ENCODE measurements at regions of chr13 and their contacts with region 1.

Region 1: DNA sequence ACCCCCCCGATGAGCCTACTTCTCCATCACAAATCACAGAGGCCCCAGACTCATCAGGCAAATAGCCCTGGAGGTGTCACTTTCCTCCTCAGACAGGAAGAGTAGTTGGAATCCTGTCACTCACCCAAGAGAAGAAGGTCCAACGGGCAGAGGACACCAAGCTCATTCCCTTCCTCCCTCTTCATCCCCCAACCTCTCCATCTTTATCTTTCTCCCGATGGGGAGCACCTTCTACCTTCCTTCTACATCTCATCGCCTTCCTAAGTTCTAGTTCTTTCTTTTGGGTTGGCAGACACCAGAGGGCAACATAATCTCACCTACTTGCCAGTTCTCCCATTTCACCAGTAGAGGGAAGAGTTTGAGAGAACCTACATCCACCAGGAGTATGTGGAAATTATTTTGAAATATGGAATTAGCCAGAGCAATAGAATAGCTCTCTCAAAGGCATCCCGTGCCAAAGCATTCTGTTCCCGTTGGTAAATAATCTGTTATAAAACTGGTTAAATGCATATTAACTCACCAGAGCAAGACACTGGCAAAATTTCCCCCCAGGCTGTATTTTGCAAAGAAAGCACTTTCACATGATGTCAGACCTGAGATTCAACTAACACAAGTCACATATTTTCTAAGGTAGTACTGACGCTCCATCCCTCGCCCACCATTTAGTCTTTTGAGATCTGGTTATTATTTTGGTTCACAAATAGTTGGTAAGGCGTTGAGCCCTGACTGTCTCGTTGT is 55.0 kb downstream of the ZIC5 start:
- DNase-seq: peak in 3 of 14 experiments; percentile 64 to 74 (median 73)
- ATAC-seq: peak; percentile 83
- H3K4me3 ChIP-seq: no peak overlapping the region
- H3K4me3 Mint-ChIP-seq: no peak overlapping the region
- H3K27ac ChIP-seq: no peak overlapping the region
- H3K27ac Mint-ChIP-seq: no peak overlapping the region
- H3K4me1 ChIP-seq: peaks cover 21% of the 10 kb centered on the region
- H3K4me1 Mint-ChIP-seq: peaks cover 8% of the 10 kb centered on the region
- H3K27me3 ChIP-seq: no peaks in the 10 kb centered on the region
- H3K27me3 Mint-ChIP-seq: peaks cover 16% of the 10 kb centered on the region
- CTCF ChIP-seq: peak; percentile 95

Region 2: GRCh38 chr13:99834246-99834645 is 82.3 kb before region 1 on chr13:
- CTCF ChIA-PET with region 1: no interaction called
- POLR2A ChIA-PET with region 1: no interaction called
- intact Hi-C with region 1: no loop called
- DNase-seq: no peak
- ATAC-seq: no peak
- H3K4me3 ChIP-seq: no peak overlapping the region
- H3K4me3 Mint-ChIP-seq: no peak overlapping the region
- H3K27ac ChIP-seq: no peak overlapping the region
- H3K27ac Mint-ChIP-seq: no peak overlapping the region
- H3K4me1 ChIP-seq: no peaks in the 10 kb centered on the region
- H3K4me1 Mint-ChIP-seq: no peaks in the 10 kb centered on the region
- H3K27me3 ChIP-seq: no peaks in the 10 kb centered on the region
- H3K27me3 Mint-ChIP-seq: no peaks in the 10 kb centered on the region
- CTCF ChIP-seq: no peak

Region 3: DNA sequence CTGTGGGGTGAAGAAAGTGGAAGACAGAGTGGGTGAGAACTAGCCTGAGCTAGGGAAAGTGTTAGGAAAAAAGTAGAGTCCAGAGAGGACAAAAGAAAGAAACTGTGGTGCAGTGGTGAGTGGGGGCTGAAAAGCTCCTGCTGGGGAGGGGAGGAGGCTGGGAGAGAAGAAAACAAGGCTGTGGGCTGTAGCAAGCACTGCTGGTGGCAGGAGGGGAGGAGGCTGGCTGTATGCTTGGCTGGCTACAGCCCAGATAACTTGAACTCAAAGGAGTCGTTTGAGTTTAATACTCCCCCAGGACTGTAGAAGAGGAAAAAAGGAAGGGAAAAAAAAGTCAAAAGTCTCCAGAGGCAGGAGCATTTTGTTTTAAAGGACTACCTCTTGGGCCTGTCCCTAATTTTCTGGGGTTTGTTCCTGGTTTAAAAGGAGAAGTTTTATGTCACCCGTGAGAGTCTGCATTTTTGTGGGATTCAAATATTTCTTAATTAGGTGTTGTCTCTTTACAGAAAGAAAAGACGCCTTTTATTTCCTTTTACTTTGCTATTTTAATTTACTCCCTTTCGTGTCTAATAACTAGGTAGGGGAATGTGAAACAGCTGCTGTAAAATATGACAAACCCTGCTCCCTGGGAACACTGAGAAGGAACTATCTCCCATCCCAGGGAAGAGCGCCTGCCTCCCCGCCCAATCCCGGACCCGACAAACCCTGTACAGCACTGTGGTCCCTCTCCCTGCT is 33.3 kb after region 1 on chr13:
- CTCF ChIA-PET with region 1: no interaction called
- POLR2A ChIA-PET with region 1: no interaction called
- intact Hi-C with region 1: no loop called
- DNase-seq: no peak
- ATAC-seq: no peak
- H3K4me3 ChIP-seq: no peak overlapping the region
- H3K4me3 Mint-ChIP-seq: no peak overlapping the region
- H3K27ac ChIP-seq: no peak overlapping the region
- H3K27ac Mint-ChIP-seq: no peak overlapping the region
- H3K4me1 ChIP-seq: no peaks in the 10 kb centered on the region
- H3K4me1 Mint-ChIP-seq: peaks cover under 1% of the 10 kb centered on the region
- H3K27me3 ChIP-seq: peaks cover 30 to 40% of the 10 kb centered on the region in 2 experiments
- H3K27me3 Mint-ChIP-seq: peaks cover 82% of the 10 kb centered on the region
- CTCF ChIP-seq: no peak

Region 4: DNA sequence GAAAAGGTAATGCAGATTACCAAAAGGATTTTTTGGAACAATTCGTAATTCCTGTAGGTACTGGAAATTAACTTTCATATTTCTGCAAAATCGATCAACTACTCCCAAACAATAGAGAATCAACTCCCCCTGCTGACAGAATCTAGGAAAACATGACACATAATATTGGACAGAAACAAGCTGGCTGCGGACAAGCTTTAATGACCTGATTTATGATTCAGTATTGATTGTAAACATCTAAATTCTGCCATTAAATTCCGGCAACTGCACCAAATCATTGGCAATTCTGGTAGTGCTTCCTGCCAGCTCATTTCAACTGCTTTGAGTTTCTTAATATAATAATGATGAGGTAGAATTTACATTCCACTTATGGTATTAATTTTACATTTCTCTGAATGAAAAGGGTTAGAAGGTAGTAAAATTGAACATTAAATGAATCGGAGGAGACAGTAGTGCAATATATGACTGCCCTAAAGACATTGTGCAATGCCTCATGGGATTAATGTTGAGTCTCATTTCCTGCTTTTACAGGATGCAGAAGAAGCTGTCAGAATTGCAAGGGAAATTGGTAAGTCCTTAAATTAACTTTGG is 318.9 kb after region 1 on chr13:
- CTCF ChIA-PET with region 1: no interaction called
- POLR2A ChIA-PET with region 1: no interaction called
- intact Hi-C with region 1: loop called in 1 of 2 experiments (anchors 2 kb)
- DNase-seq: peak in 4 of 14 experiments; percentile 27 to 67 (median 65)
- ATAC-seq: no peak
- H3K4me3 ChIP-seq: no peak overlapping the region
- H3K4me3 Mint-ChIP-seq: no peak overlapping the region
- H3K27ac ChIP-seq: no peak overlapping the region
- H3K27ac Mint-ChIP-seq: no peak overlapping the region
- H3K4me1 ChIP-seq: peaks cover 4% of the 10 kb centered on the region
- H3K4me1 Mint-ChIP-seq: no peaks in the 10 kb centered on the region
- H3K27me3 ChIP-seq: no peaks in the 10 kb centered on the region
- H3K27me3 Mint-ChIP-seq: no peaks in the 10 kb centered on the region
- CTCF ChIP-seq: peak; percentile 85